ENCODE measurements at regions of chr12 and their contacts with region 1.

Region 1: DNA sequence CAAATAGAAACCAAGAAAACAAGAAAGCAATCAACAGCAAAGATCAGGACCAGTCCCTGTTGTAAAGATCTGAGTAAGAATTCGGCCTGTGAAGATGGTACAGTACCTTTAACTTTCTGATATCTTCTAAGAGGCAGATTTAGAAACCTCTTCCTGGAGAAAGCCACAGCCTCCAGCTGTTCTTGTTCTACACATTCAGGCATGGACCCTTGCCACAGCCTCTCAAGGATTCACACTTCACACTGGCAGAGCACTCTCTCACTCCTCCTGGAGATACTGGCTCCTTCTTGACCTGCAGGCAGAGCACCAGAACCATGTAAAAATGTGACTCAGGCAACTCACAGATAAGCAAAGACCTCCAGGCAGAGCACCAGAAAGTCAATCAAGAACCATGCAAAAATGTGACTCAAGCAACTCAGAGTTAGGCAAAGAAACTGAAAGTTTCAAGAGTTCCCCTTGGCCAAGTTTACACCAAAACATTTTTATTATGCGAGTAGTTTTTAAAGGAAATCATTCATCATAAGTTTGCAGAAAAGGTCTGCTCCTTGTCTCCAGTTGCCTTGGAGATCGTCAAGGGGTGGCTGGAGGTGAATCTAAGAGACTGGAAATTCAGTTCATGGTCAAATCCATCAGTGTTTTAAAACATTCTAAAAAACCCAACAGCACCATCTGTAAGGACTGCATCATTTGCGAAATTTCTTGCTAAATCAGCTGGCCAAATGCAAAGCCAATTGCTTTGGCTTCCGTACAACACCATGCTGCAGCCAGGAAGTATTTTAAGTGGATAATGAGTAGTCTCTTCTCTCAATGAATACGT is 119.3 kb upstream of the MDM1 start:
- DNase-seq: peak; percentile 53
- H3K4me3 Mint-ChIP-seq: peak overlapping the region; percentile 73
- H3K27ac Mint-ChIP-seq: peak overlapping the region; percentile 97
- H3K4me1 Mint-ChIP-seq: peaks cover 99% of the 10 kb centered on the region
- H3K27me3 Mint-ChIP-seq: no peaks in the 10 kb centered on the region

Region 2: DNA sequence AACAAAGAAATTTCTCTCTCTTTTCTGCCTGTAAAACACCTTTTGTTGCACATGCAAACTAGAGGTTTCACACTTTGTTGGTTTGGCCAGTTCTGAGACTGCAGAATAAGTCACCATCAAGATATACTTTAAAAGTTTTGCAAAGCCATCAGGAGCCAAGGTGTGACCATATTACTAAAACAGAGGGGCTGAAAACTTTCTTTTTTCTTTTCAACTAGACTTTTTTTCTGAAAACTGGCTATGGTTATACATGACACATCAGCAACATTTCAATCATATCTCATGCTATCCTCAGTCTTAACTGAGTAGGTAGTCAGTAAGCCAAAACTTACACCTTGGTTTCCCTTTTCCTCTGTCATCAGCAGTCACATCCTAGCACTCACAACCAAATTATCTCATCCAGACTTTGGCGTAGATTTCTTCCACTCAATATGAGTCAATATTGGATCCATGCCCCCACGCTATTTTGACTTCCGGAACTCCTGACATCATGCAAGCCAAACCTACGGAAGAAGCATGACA is 287.8 kb before region 1 on chr12:
- intact Hi-C with region 1: no loop called
- DNase-seq: peak; percentile 34
- H3K4me3 Mint-ChIP-seq: peak overlapping the region; percentile 61
- H3K27ac Mint-ChIP-seq: peak overlapping the region; percentile 78
- H3K4me1 Mint-ChIP-seq: peaks cover 71% of the 10 kb centered on the region
- H3K27me3 Mint-ChIP-seq: no peaks in the 10 kb centered on the region

Region 3: DNA sequence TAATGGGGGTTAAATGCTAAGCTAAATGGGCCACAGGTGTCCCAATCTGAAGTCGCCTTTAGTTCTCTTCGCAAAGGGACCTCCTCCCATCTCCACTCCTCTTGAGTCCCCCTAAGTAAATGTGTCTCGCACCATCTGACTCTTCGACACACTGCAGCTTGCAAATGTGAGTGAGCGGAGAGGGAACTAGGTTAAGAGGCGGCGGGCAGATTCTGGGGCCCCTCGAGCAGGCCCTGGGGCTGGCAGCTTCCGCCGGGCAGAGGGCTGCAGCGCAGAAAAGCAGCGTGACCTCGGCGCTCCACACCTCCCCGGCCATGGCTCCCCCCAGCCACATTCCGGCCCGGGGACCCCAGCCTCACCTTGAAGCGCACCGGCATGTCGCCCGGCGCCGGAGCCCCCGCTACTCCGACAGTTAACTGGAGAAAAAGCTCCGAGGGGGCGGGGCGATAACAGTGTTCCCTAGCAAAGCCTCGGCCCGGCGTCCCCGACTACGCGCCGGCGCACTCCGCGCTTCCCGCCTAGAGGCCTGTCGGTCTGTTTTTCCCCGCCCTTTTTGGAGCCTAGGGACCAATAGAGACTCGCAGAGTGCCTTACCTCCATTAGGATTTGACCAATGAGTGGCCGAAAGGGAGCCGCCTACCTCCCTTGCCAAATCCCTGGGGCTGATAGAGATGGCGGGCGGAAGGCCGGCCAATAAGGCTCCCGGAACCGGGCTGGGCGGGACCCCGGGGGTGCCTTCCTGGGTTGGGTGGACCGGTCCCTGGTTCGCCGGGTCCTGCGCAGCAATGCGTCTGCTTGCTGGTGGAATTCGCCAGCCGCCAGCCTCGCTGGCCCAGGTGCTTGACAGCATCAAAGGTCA is 119.4 kb before region 1 on chr12 and contains the start of gene MDM1:
- intact Hi-C with region 1: loop called (anchors 1 kb)
- DNase-seq: peak; percentile 95
- H3K4me3 Mint-ChIP-seq: peak within 1 kb of the TSS; percentile 89
- H3K27ac Mint-ChIP-seq: peak within 1 kb of the TSS; percentile 77
- H3K4me1 Mint-ChIP-seq: peaks cover 55% of the 10 kb centered on the region
- H3K27me3 Mint-ChIP-seq: peaks cover 2% of the 10 kb centered on the region
- total RNA-seq, gene MDM1: 26.8 and 29.9 TPM in 2 replicates

Region 4: DNA sequence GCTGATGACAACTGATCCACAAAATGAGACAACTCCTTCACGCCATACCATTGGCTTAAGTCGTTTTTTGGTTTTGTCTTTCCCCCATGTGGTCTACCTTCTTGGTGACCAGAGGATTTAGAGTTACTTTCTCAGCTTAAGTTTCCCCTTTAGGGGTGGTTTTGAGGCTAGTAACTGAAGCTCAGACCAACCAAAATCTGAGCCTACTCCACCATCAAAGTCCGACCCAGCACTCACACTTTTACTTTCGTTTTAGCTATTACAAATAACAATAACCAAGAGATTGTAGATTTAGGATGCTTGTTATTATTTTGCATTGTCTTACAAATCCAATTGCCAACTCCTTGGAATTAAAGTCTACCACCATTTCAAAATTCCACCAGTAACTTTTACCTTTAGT is 11.3 kb after region 1 on chr12:
- intact Hi-C with region 1: loop called (anchors 1 kb)
- DNase-seq: no peak
- H3K4me3 Mint-ChIP-seq: peak overlapping the region; percentile 71
- H3K27ac Mint-ChIP-seq: peak overlapping the region; percentile 85
- H3K4me1 Mint-ChIP-seq: peaks cover 23% of the 10 kb centered on the region
- H3K27me3 Mint-ChIP-seq: no peaks in the 10 kb centered on the region

Region 5: GRCh38 chr12:68538726-68539614 is 87.5 kb after region 1 on chr12:
- intact Hi-C with region 1: loop called (anchors 1 kb)
- DNase-seq: peak; percentile 54
- H3K4me3 Mint-ChIP-seq: peak overlapping the region; percentile 23
- H3K27ac Mint-ChIP-seq: peak overlapping the region; percentile 52
- H3K4me1 Mint-ChIP-seq: peaks cover 48% of the 10 kb centered on the region
- H3K27me3 Mint-ChIP-seq: peaks cover 2% of the 10 kb centered on the region

Region 6: DNA sequence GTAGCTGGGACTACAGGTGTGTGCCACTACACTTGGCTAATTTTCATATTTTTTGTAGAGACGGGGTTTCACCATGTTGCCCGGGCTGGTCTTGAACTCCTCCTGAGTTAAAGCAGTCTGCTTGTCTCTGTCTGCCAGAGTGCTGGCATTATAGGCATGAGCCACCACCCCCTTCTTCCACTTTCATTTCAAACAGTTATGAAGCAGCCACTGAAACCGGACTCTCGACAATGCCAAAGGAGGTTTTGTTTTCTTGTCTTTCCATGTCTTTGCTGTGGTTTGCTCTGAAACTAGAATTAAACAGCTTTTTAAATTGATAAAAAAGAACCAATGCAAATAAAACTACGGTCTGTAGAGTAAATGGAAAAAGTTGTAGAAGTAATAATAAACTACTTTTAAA is 189.7 kb after region 1 on chr12:
- intact Hi-C with region 1: loop called (anchors 1 kb)
- DNase-seq: peak; percentile 36
- H3K4me3 Mint-ChIP-seq: peak overlapping the region; percentile 61
- H3K27ac Mint-ChIP-seq: peak overlapping the region; percentile 71
- H3K4me1 Mint-ChIP-seq: peaks cover 63% of the 10 kb centered on the region
- H3K27me3 Mint-ChIP-seq: no peaks in the 10 kb centered on the region

Measured in activated T-helper 1 cell treated with anti-CD3 and anti-CD28 coated beads, Interleukin-12 subunit alpha, Interleukin-12 subunit beta, Interleukin-2, Interleukin-4 antibody, amounts not matched to agents 30 ng/mL and 10 ng/mL and 1 ng/mL, durations not matched to agents 14 hours and 24 hours and 36 hours (primary cell).